Natural killer cell (primary cell): ENCODE measurements at regions of chr5 and their contacts with region 1.

Region 1: GRCh38 chr5:107486489-107486888 is 184.2 kb downstream of the EFNA5 start:
- DNase-seq: peak; percentile 47 to 72
- ATAC-seq: peak; percentile 92 to 99 (median 95)
- H3K4me3 ChIP-seq: no peak overlapping the region
- H3K4me3 Mint-ChIP-seq: peak overlapping the region; percentile 45
- H3K27ac ChIP-seq: peak overlapping the region; percentile 95
- H3K27ac Mint-ChIP-seq: peak overlapping the region; percentile 88 to 98
- H3K4me1 ChIP-seq: peaks cover 19% of the 10 kb centered on the region
- H3K4me1 Mint-ChIP-seq: peaks cover 43 to 55% of the 10 kb centered on the region in 2 donors
- H3K27me3 ChIP-seq: no peaks in the 10 kb centered on the region
- H3K27me3 Mint-ChIP-seq: no peaks in the 10 kb centered on the region
- CTCF ChIP-seq: no peak

Region 2: DNA sequence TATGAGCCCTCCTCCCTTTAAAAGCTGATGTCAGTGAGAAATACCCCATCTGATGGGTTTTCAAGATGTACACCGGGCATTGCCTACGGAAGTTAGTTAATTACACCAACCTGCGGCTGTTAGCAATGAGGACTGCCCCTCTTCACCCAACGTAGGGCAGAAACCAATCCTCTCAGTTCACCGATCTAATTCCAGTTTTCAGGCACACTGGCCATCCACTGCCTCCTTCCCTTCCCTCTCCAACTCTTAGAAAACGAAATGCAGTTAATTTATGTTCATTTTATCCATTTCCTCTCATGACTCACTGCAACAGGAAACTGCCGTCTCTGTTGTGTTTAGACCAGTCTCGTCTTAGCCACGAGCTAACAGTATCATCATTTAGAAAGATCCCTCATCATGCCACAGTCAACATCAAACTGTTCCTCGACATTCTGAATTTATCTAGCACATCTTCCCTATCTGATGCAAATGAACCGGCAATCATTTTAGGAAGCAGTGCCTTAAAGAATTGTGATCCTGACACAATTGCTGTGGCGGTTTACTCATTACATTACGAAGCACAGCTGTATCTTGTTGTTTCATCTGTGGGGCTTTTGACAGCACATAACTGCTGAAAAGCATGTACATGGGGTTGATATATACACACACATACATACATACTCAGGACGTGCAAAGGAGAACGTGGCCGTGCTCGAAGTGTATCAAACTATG is 15.6 kb after region 1 on chr5:
- intact Hi-C with region 1: loop called (anchors 2 kb)
- DNase-seq: peak in 1 of 2 donors; percentile 39
- ATAC-seq: peak; percentile 88 to 93 (median 92)
- H3K4me3 ChIP-seq: no peak overlapping the region
- H3K4me3 Mint-ChIP-seq: peak overlapping the region; percentile 70
- H3K27ac ChIP-seq: peak overlapping the region; percentile 75
- H3K27ac Mint-ChIP-seq: peak overlapping the region; percentile 83 to 92
- H3K4me1 ChIP-seq: peaks cover 8% of the 10 kb centered on the region
- H3K4me1 Mint-ChIP-seq: peaks cover 26 to 29% of the 10 kb centered on the region in 2 donors
- H3K27me3 ChIP-seq: peaks cover 5% of the 10 kb centered on the region
- H3K27me3 Mint-ChIP-seq: peaks cover 0 to 3% of the 10 kb centered on the region in 2 donors
- CTCF ChIP-seq: no peak

Region 3: DNA sequence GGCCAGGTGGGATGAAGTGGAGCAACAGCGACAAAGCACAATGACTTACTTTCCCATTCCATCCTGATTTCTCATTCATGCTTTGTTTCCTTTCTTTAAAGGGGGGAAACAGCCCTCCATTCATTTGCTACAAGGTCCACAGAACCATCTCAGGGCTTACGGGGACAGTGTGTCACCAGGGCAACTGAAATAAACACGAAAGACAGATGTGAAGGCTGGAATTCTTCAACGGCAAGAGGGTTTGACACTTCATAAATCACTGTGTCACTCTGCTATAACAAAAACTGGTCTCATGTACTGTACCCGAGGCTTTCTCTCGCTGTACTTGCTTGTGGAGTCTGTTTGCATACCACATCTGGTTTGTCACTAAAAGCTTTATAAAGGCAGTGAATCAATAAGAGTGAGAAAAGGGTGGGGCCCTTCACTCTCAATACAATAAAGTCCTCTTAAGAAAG is 33.4 kb after region 1 on chr5:
- intact Hi-C with region 1: loop called (anchors 1 kb)
- DNase-seq: peak in 1 of 2 donors; percentile 31
- ATAC-seq: peak; percentile 84 to 93 (median 91)
- H3K4me3 ChIP-seq: no peak overlapping the region
- H3K4me3 Mint-ChIP-seq: peak overlapping the region; percentile 71
- H3K27ac ChIP-seq: peak overlapping the region; percentile 64
- H3K27ac Mint-ChIP-seq: peak overlapping the region; percentile 88 to 89
- H3K4me1 ChIP-seq: peaks cover 6% of the 10 kb centered on the region
- H3K4me1 Mint-ChIP-seq: peaks cover 13 to 18% of the 10 kb centered on the region in 2 donors
- H3K27me3 ChIP-seq: no peaks in the 10 kb centered on the region
- H3K27me3 Mint-ChIP-seq: peaks cover 0 to 7% of the 10 kb centered on the region in 2 donors
- CTCF ChIP-seq: no peak